AG04449 (cell line): ENCODE measurements at regions of chr9 and their contacts with region 1.

Region 1: GRCh38 chr9:84261082-84261746 is 79.3 kb downstream of the SLC28A3 start:
- DNase-seq: peak; percentile 10
- H3K4me3 ChIP-seq: no peak overlapping the region
- CTCF ChIP-seq: peak; percentile 92

Region 2: DNA sequence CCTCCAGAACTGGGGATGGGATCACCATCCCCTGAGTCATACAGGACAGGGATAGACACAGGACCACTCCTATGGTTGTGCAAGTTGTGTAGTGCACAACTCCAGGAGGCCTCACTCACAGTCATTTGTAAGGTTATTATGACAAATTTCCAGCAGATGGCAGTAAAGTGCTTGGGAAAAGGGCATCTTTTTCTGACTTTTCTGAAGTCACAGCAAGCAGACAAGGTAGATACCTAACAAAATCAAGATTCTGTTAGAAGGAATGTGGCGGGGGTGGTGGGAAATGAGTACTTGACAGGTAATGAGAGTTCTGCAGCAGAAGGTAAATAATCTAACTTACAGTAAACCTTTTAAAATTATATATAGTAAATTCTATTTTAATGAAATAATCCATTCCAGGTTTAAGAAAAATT is 323.3 kb before region 1 on chr9:
- CTCF ChIA-PET with region 1: interaction called, 106 read pairs
- POLR2A ChIA-PET with region 1: no interaction called
- DNase-seq: no peak
- H3K4me3 ChIP-seq: no peak overlapping the region
- CTCF ChIP-seq: peak; percentile 45

Region 3: GRCh38 chr9:83965350-83966208 is 295.6 kb before region 1 on chr9:
- CTCF ChIA-PET with region 1: interaction called, 16 read pairs
- POLR2A ChIA-PET with region 1: no interaction called
- DNase-seq: no peak
- H3K4me3 ChIP-seq: no peak overlapping the region
- CTCF ChIP-seq: no peak

Region 4: GRCh38 chr9:83980395-83981125 is 280.7 kb before region 1 on chr9 and contains the start of gene RMI1:
- CTCF ChIA-PET with region 1: interaction called, 36 read pairs
- POLR2A ChIA-PET with region 1: interaction called, 8 read pairs
- DNase-seq: peak; percentile 81
- H3K4me3 ChIP-seq: peak within 1 kb of the TSS; percentile 73
- CTCF ChIP-seq: peak; percentile 25

Region 5: GRCh38 chr9:84278130-84278529 is 16.9 kb after region 1 on chr9:
- CTCF ChIA-PET with region 1: interaction called, 23 read pairs
- POLR2A ChIA-PET with region 1: no interaction called
- DNase-seq: no peak
- H3K4me3 ChIP-seq: no peak overlapping the region
- CTCF ChIP-seq: no peak

Region 6: DNA sequence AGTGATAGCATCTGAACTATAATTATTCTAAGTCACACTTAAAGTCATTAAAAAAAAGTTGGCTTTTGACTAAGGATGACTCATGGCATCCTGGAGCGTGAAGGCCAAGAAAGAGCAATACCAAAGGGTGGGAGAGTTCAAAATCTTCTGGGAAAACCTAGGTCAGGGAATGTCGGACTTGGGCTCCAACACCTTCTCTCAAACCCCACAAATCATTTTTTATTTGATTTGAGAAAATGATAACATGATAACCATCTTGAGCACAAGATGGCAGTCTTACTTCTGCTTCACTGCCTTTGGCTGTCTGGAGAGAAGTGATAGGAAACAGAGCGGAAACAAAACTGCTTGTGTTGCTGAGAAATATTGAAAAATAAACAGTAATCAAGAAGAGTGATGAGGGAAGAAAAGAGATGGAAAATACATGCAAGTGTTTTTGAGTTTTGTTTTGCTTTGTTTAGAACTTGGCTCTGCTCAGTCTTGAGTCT is 391.4 kb after region 1 on chr9:
- CTCF ChIA-PET with region 1: no interaction called
- POLR2A ChIA-PET with region 1: no interaction called
- DNase-seq: no peak
- H3K4me3 ChIP-seq: no peak overlapping the region
- CTCF ChIP-seq: no peak